H1 (cell line): ENCODE measurements at regions of chrX and their contacts with region 1.

Region 1: GRCh38 chrX:139936259-139936658 is 3.4 kb upstream of the ATP11C start:
- DNase-seq: no peak
- H3K4me3 ChIP-seq: peak overlapping the region in 1 of 4 experiments; percentile 39; a peak in 1 of 8 replicates
- H3K27ac ChIP-seq: no peak overlapping the region
- H3K4me1 ChIP-seq: peaks cover 0 to 7% (median 1%) of the 10 kb centered on the region in 4 experiments; a peak in 3 of 7 replicates
- H3K27me3 ChIP-seq: no peaks in the 10 kb centered on the region
- CTCF ChIP-seq: peak in 2 of 3 experiments; percentile 13 to 31; a peak in 1 of 4 replicates
- EP300 ChIP-seq: no peak
- POLR2A ChIP-seq: no peak
- RAD21 ChIP-seq: peak in 1 of 2 experiments; percentile 13; a peak in 2 of 4 replicates

Region 2: GRCh38 chrX:139890991-139891700 is 45.1 kb before region 1 on chrX:
- CTCF ChIA-PET with region 1: no interaction called
- POLR2A ChIA-PET with region 1: no interaction called
- DNase-seq: no peak
- H3K4me3 ChIP-seq: no peak overlapping the region
- H3K27ac ChIP-seq: no peak overlapping the region
- H3K4me1 ChIP-seq: no peaks in the 10 kb centered on the region
- H3K27me3 ChIP-seq: no peaks in the 10 kb centered on the region
- CTCF ChIP-seq: no peak
- EP300 ChIP-seq: no peak
- POLR2A ChIP-seq: no peak
- RAD21 ChIP-seq: no peak

Region 3: DNA sequence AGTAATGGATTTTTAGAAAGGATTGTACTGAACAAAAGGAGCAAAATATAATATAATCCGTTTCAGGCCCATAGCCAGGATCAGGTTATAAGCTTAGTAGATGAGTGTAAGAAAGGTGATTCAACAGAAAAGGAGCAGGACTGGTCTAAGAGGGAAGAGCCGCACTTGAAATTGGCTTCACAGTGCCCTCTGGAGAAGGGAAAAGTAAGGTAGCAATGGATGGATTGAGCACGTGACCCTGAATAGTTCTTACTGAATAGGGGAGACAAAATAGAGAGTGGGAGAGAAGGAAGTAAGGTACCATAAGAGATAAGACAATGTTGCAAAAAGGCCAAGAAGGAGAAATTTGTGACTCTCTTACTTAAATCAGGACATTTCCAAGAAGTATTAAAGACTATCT is 13.4 kb after region 1 on chrX:
- CTCF ChIA-PET with region 1: interaction called, 12 read pairs
- POLR2A ChIA-PET with region 1: interaction called, 4 read pairs
- DNase-seq: no peak
- H3K4me3 ChIP-seq: no peak overlapping the region
- H3K27ac ChIP-seq: no peak overlapping the region
- H3K4me1 ChIP-seq: no peaks in the 10 kb centered on the region
- H3K27me3 ChIP-seq: no peaks in the 10 kb centered on the region
- CTCF ChIP-seq: peak in 2 of 3 experiments; percentile 17 to 18; a peak in 2 of 4 replicates
- EP300 ChIP-seq: no peak
- POLR2A ChIP-seq: no peak
- RAD21 ChIP-seq: peak; percentile 41 to 46; a peak in 3 of 4 replicates